Activated CD4-positive, alpha-beta memory T cell treated with anti-CD3 and anti-CD28 coated beads, Interleukin-2, amount 10 ng/mL, durations not matched to agents 7 days and 5 days (primary cell): ENCODE measurements at regions of chr5 and their contacts with region 1.

Region 1: GRCh38 chr5:154072414-154073171 is 33.8 kb downstream of the MFAP3 start:
- DNase-seq: peak; percentile 90
- H3K4me3 Mint-ChIP-seq: no peak overlapping the region
- H3K27ac Mint-ChIP-seq: peak overlapping the region; percentile 27
- H3K4me1 Mint-ChIP-seq: peaks cover 56% of the 10 kb centered on the region
- H3K27me3 Mint-ChIP-seq: no peaks in the 10 kb centered on the region

Region 2: GRCh38 chr5:153372425-153373129 is 700.0 kb before region 1 on chr5:
- CTCF ChIA-PET with region 1: no interaction called
- POLR2A ChIA-PET with region 1: no interaction called
- DNase-seq: no peak
- H3K4me3 Mint-ChIP-seq: no peak overlapping the region
- H3K27ac Mint-ChIP-seq: no peak overlapping the region
- H3K4me1 Mint-ChIP-seq: no peaks in the 10 kb centered on the region
- H3K27me3 Mint-ChIP-seq: no peaks in the 10 kb centered on the region

Region 3: GRCh38 chr5:153745778-153746395 is 326.7 kb before region 1 on chr5:
- CTCF ChIA-PET with region 1: no interaction called
- POLR2A ChIA-PET with region 1: no interaction called
- DNase-seq: no peak
- H3K4me3 Mint-ChIP-seq: no peak overlapping the region
- H3K27ac Mint-ChIP-seq: no peak overlapping the region
- H3K4me1 Mint-ChIP-seq: no peaks in the 10 kb centered on the region
- H3K27me3 Mint-ChIP-seq: no peaks in the 10 kb centered on the region

Region 4: GRCh38 chr5:153974131-153974812 is 98.3 kb before region 1 on chr5:
- CTCF ChIA-PET with region 1: interaction called, 40 read pairs
- POLR2A ChIA-PET with region 1: no interaction called
- DNase-seq: peak; percentile 35
- H3K4me3 Mint-ChIP-seq: no peak overlapping the region
- H3K27ac Mint-ChIP-seq: no peak overlapping the region
- H3K4me1 Mint-ChIP-seq: peaks cover 3% of the 10 kb centered on the region
- H3K27me3 Mint-ChIP-seq: peaks cover 6% of the 10 kb centered on the region

Region 5: GRCh38 chr5:154058055-154059038 is 14.2 kb before region 1 on chr5:
- CTCF ChIA-PET with region 1: interaction called, 30 read pairs
- POLR2A ChIA-PET with region 1: interaction called, 10 read pairs
- DNase-seq: no peak
- H3K4me3 Mint-ChIP-seq: no peak overlapping the region
- H3K27ac Mint-ChIP-seq: peak overlapping the region; percentile 0
- H3K4me1 Mint-ChIP-seq: peaks cover 34% of the 10 kb centered on the region
- H3K27me3 Mint-ChIP-seq: no peaks in the 10 kb centered on the region

Region 6: DNA sequence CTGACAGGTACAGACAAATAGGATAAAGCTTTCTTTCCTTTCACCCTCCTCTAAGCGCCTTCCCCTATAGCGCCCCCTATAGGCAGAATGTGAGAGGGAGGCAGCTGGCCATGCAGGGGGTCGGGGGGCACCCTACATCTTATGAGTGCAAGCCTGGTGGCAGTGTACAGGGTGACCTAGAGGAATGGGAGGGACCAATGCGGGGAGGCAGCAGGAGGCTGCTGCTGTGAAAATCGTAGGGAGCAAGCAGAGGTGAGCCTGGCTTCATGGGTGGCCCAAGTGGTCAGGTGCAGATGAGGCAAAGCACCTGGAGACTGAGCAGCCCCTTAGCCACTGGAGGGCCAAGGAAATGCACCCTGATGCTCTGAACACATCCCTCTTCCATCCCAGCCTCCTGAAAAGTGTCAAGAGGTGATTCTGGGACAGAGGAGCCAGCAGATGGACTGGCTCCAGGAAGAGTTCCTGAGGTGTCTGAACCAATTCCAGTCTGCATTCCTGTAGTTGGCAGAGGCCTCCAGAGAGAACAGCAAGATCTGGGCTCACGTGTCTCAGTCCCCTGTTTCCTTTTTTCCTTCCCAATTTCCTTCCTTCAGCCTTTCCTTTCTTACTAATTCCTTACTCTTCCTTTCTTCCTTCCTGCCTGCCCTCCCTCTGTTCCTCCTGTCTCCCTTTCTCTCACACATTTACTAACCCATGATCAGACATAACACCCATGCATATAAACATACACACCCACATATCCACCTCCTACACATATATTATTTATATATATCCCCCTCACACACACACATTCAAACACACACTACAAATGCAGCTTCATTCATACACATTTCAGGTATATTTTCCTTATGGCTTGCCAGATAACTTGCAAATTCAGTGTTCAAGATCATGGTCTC is 85.1 kb after region 1 on chr5:
- CTCF ChIA-PET with region 1: interaction called, 16 read pairs
- POLR2A ChIA-PET with region 1: no interaction called
- DNase-seq: no peak
- H3K4me3 Mint-ChIP-seq: no peak overlapping the region
- H3K27ac Mint-ChIP-seq: no peak overlapping the region
- H3K4me1 Mint-ChIP-seq: no peaks in the 10 kb centered on the region
- H3K27me3 Mint-ChIP-seq: peaks cover 46% of the 10 kb centered on the region

Region 7: DNA sequence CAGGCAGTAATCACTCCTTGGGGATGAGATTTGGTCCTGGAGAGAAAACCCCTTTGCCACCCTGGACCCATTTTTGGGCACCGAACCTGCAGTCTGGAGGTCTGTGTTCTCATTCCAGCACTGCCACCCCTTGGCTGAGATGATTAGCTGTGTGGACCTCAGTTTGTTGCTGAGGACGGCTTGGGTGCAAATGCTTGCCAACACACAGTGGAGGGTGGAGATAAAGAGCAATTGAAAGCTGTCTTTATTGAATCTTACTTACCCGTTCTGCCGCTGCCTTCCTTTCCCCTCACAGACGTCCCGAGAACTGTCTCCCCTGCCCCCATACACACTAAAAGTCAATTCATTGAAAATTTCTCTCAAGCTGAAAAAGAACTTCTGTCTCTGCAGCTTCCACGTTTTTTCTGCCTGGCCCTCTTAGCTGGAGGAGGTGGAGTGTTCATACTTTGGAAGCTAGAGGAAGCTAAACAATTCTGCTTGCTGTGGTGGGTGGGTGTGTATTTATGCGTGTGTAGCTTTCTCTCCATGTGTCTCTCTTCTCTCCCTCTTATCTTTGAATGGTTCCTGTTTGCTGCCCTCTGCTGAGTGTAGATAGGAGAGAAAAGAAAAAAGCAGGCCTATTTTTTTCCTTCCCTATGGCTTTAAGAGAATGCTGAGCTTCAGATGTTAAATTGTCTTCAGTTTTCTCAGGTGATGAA is 124.5 kb after region 1 on chr5:
- CTCF ChIA-PET with region 1: interaction called, 109 read pairs
- POLR2A ChIA-PET with region 1: interaction called, 36 read pairs
- DNase-seq: no peak
- H3K4me3 Mint-ChIP-seq: no peak overlapping the region
- H3K27ac Mint-ChIP-seq: peak overlapping the region; percentile 85
- H3K4me1 Mint-ChIP-seq: peaks cover 67% of the 10 kb centered on the region
- H3K27me3 Mint-ChIP-seq: no peaks in the 10 kb centered on the region

Region 8: DNA sequence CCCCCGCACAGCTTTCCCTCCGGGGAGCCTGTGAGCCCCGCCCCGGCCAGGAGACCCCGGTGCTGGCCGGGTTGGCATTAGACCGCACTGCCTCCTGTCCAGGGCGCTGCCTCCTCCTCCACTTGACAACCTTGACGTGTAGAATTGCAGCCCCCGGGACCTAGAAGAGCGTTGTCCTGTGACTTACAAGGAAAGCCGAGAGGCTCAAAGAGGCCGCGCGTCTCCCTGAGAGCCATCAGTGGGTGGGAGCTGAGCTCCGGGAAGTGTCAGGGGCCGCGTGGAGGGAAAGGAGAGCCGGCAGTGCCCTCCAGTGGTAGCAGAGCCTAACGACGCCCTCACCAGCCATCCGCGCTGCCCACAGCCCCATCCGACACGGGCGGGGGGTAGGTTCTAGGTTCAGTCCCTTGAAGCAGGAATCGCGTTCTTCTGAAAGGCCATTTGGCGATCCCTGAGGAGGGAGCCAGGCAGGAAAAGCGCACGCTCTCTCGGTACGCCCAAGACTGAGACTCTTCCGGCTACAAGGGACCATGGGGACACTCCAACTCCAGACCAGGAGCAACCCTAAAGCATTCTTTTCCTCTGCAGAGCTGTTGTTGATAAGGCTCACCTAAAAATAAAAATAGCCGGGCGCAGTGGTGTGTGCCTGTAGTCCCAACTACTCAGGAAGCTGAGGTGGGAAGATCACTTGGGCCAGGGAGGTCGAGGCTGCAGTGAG is 332.6 kb after region 1 on chr5:
- CTCF ChIA-PET with region 1: interaction called, 209 read pairs
- POLR2A ChIA-PET with region 1: interaction called, 16 read pairs
- DNase-seq: peak; percentile 77
- H3K4me3 Mint-ChIP-seq: no peak overlapping the region
- H3K27ac Mint-ChIP-seq: no peak overlapping the region
- H3K4me1 Mint-ChIP-seq: peaks cover 8% of the 10 kb centered on the region
- H3K27me3 Mint-ChIP-seq: no peaks in the 10 kb centered on the region